Astrocyte of the cerebellum (primary cell): ENCODE measurements at regions of chr3 and their contacts with region 1.

Region 1: DNA sequence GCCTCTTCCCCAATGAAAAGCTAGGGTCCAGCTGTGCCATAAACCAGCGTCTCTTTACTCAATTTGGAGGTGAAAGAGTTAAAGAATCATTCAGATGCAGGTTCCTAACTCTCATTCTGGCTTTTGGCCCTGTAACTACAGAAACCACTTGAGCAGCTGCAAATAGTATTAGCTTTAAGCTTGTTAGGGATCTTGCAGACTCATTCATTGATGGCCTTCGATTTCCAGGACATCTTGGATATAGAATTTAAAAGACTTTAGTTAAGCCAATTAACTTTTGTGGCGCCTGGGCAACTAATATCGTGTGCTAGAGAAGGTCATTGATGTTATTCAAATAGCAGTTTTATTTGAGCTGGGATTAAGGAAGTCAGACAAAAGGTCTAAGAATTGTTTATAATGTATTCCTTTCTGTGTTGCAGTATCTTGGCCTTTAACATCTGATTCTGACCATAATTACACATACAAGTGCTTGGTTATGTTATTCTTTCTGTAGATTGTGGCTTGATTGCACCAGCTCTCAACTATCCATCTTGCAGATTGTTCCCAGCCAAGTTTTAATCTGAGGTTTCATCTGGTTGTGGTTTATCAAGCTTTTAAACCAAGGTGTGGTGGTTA is 185.3 kb downstream of the CACNA2D3 start:
- DNase-seq: peak; percentile 3
- H3K4me3 ChIP-seq: no peak overlapping the region
- CTCF ChIP-seq: no peak

Region 2: GRCh38 chr3:54094926-54095325 is 212.7 kb before region 1 on chr3:
- in situ Hi-C with region 1: no loop called
- DNase-seq: no peak
- H3K4me3 ChIP-seq: no peak overlapping the region
- CTCF ChIP-seq: no peak

Region 3: GRCh38 chr3:54168451-54168850 is 139.2 kb before region 1 on chr3:
- in situ Hi-C with region 1: no loop called
- DNase-seq: no peak
- H3K4me3 ChIP-seq: no peak overlapping the region
- CTCF ChIP-seq: no peak

Region 4: DNA sequence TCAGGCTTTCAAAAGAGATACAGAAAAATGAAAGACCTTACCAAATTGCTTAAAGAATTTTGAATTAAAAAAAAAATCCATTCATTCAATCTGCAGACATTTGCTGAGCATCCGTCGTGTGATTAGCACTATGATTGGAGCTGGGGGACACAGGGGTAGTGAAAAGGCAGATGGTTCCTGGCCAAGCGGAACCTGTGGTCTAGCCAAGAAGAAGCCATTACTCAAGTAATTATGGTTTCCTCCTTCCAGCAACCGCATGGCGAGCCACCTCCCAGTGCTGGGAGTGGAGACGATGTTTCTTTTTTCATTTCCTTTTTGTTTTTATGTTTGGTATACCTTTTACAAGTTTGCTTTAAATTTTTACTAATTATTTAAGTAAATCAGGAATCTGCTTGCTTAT is 45.1 kb before region 1 on chr3:
- in situ Hi-C with region 1: loop called (anchors 5 kb)
- DNase-seq: no peak
- H3K4me3 ChIP-seq: no peak overlapping the region
- CTCF ChIP-seq: no peak

Region 5: DNA sequence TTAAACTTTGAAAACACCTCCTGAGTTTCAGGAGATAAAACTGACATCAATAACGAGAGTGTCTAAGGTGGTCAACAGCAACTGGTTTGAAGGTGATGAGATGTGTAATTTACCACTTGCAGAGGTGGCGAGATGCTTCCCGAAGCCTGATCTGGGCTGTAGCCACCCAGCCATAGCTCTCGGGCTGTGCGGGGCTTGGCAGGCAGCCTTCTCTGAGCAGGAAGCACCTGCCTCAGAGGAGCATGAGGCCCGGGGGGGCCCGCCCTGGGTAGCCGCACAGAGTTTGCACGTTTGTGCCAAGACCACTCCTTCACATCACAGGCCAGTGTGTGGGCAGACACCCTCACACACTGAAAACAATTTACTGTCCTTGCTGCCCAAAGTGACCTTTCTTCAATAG is 35.0 kb after region 1 on chr3:
- in situ Hi-C with region 1: no loop called
- DNase-seq: no peak
- H3K4me3 ChIP-seq: no peak overlapping the region
- CTCF ChIP-seq: no peak

Region 6: DNA sequence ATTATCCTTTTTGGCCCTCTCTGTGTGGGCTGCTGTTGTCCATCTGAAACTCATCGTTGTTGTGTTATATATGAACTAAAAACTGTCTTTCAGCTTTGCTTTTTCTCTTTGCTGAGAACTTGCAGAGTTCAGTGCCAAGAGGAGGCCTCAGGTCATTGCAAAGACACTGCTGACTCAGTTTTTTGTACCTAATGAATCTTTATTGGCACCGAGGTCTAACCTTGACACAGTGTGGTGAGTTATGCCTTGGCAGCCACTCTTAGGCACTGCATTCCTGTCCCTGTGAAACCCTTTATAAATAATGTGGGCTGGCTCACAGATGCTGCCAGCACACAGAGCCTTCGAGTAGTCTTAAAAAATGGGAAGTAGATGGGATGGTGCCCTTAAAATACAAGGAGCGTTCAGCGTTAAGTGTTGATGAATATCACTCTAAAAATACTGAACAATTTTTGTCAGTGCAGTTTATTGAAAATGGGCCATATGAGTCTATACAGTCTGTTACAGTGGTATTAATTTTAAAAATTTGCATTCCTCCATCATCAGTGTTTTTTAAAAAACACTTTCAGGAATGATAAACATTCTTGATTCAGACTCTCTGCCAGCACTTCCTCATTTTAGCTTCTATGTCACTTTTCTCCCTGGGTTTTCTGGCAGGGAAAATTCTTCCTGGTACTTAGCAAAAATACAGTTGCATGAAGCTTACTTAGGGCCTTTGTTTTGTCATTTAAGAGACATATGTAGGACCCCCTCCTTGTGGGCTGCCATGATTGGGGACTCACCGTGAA is 48.8 kb after region 1 on chr3:
- in situ Hi-C with region 1: no loop called
- DNase-seq: peak; percentile 18
- H3K4me3 ChIP-seq: no peak overlapping the region
- CTCF ChIP-seq: no peak